CD14-positive monocyte (primary cell): ENCODE measurements at regions of chr9 and their contacts with region 1.

Region 1: GRCh38 chr9:89375191-89375760 is 57.0 kb downstream of the SECISBP2 start:
- DNase-seq: peak in 1 of 3 donors; percentile 6
- H3K4me3 ChIP-seq: no peak overlapping the region
- H3K4me3 Mint-ChIP-seq: peak overlapping the region in 1 of 2 donors; percentile 39
- H3K27ac ChIP-seq: peak overlapping the region; percentile 23 to 54
- H3K27ac Mint-ChIP-seq: peak overlapping the region; percentile 40 to 77 (median 68)
- H3K4me1 ChIP-seq: peaks cover 25 to 32% of the 10 kb centered on the region in 2 donors
- H3K4me1 Mint-ChIP-seq: peaks cover 38% of the 10 kb centered on the region
- H3K27me3 ChIP-seq: no peaks in the 10 kb centered on the region
- H3K27me3 Mint-ChIP-seq: no peaks in the 10 kb centered on the region
- CTCF ChIP-seq: no peak

Region 2: GRCh38 chr9:89278997-89279739 is 96.1 kb before region 1 on chr9:
- intact Hi-C with region 1: no loop called
- DNase-seq: peak in 2 of 3 donors; percentile 16 to 36
- H3K4me3 ChIP-seq: no peak overlapping the region
- H3K4me3 Mint-ChIP-seq: no peak overlapping the region
- H3K27ac ChIP-seq: no peak overlapping the region
- H3K27ac Mint-ChIP-seq: no peak overlapping the region
- H3K4me1 ChIP-seq: no peaks in the 10 kb centered on the region
- H3K4me1 Mint-ChIP-seq: peaks cover 8% of the 10 kb centered on the region
- H3K27me3 ChIP-seq: no peaks in the 10 kb centered on the region
- H3K27me3 Mint-ChIP-seq: peaks cover 0 to 5% (median 2%) of the 10 kb centered on the region in 3 donors
- CTCF ChIP-seq: peak; percentile 90

Region 3: DNA sequence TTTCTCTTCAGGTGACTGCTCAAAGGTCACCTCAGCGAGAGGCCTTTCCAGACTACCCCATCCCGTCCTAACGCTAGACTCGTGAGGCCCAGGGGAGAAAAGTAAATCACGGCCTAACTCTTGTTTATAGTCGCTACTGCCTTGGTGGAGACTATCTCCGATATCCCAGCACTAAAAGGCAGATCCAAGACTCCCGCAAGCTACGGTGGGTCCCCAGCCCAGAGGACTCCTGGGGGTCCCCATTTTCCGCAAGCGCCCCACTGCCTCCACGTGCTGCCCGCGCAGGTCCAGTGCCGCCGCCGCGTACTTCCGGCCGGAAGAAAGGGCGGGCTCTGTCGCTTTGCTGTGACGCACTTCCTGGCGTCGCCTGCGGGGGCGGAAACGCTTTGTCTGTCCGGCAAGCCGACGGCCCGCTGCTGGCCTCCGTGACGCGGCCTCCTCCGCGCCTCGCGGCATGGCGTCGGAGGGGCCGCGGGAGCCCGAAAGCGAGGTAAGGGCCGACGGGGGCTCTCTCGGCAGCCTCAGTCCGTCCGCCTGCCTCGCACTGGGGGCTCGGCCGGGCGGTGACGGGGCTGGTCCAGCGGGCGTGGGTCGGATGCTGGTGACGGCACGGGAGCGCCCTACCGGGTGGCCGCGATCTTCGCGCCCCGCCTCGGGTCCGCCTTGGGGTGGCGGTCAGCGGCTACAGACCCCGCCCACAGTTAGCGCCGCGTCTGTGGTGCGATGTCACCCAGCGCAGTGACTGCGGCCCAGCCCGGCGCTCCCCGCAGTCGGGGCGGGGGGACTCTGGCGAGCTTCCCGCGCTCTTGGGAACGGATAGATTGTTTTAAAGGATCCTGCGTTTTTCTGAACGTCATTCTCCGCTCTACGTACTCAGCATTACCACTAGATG is 56.9 kb before region 1 on chr9 and contains the start of gene SECISBP2:
- intact Hi-C with region 1: loop called (anchors 5 to 10 kb)
- DNase-seq: peak; percentile 91 to 96 (median 95)
- H3K4me3 ChIP-seq: peak within 1 kb of the TSS; percentile 54 to 77 (median 76)
- H3K4me3 Mint-ChIP-seq: peak within 1 kb of the TSS; percentile 86 to 92
- H3K27ac ChIP-seq: peak within 1 kb of the TSS; percentile 96
- H3K27ac Mint-ChIP-seq: peak within 1 kb of the TSS; percentile 97 to 98 (median 98)
- H3K4me1 ChIP-seq: peaks cover 31 to 45% of the 10 kb centered on the region in 2 donors
- H3K4me1 Mint-ChIP-seq: peaks cover 53% of the 10 kb centered on the region
- H3K27me3 ChIP-seq: no peaks in the 10 kb centered on the region
- H3K27me3 Mint-ChIP-seq: no peaks in the 10 kb centered on the region
- CTCF ChIP-seq: peak; percentile 79
- polyA plus RNA-seq, gene SECISBP2: 8.6 to 51.4 (median 9.8) TPM

Region 4: DNA sequence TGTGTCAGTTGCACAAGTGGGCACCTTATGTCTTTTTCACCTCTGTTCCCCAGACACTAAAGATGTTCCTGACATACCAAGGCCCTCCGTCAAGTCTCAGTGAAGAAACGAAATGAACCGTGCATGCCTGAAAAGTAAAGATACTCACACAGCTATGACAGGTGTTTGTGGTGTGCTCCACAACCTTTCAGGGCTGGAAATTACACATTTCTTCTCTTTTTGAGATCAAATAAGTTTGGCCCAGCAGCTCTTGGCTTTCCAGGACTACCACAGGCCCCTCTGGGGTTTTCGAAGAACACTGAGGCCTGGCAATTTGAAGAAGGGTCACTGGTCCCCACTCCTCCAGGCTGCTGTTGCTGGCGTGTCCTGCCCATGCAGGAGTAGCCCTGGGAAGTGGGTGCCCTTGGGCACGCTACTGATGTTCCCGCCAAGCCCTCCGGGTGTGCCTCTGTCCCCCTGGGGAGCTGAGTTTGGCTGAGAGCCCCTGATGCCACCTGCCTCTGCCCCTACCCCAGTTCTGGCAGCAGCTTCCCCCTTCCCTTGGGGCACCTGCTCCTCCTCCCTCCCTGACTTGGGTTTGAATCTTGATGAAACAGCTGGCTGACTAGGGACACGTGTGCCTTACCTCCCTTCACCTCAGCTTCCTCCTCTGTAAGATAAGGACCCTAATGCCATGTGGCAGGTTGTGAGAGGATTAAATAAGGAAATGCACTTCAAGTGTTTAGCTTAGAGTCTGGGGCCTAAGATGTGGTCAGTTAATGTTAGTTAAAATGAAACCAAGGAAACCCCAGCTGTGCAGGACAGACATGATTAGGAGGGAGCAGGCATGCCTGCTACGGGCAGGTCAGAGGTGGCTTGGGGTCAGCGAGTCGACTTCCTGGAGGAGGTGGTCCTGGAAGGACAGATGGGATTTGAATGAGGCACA is 180.4 kb after region 1 on chr9:
- intact Hi-C with region 1: loop called (anchors 5 to 10 kb)
- DNase-seq: peak; percentile 15 to 50 (median 32)
- H3K4me3 ChIP-seq: peak overlapping the region in 1 of 3 experiments; percentile 68
- H3K4me3 Mint-ChIP-seq: peak overlapping the region; percentile 67 to 86
- H3K27ac ChIP-seq: peak overlapping the region; percentile 49 to 90
- H3K27ac Mint-ChIP-seq: peak overlapping the region; percentile 93 to 99 (median 96)
- H3K4me1 ChIP-seq: peaks cover 23 to 36% of the 10 kb centered on the region in 2 donors
- H3K4me1 Mint-ChIP-seq: peaks cover 37% of the 10 kb centered on the region
- H3K27me3 ChIP-seq: no peaks in the 10 kb centered on the region
- H3K27me3 Mint-ChIP-seq: peaks cover 0 to 6% (median 4%) of the 10 kb centered on the region in 3 donors
- CTCF ChIP-seq: no peak